Testis (tissue), 5 donors: ENCODE measurements at regions of chr17 and their contacts with region 1.

Region 1: GRCh38 chr17:34637548-34638525 is 58.5 kb downstream of the TMEM132E start:
- DNase-seq: peak; percentile 87
- H3K4me3 ChIP-seq: peak overlapping the region; percentile 35 to 44
- H3K27ac ChIP-seq: no peak overlapping the region
- H3K4me1 ChIP-seq: peaks cover 3% of the 10 kb centered on the region
- H3K27me3 ChIP-seq: no peaks in the 10 kb centered on the region
- CTCF ChIP-seq: peak; percentile 74 to 89 (median 84)
- POLR2A ChIP-seq: no peak

Region 2: GRCh38 chr17:34420254-34420766 is 217.5 kb before region 1 on chr17:
- intact Hi-C with region 1: loop called (anchors 10 kb)
- DNase-seq: peak; percentile 85
- H3K4me3 ChIP-seq: no peak overlapping the region
- H3K27ac ChIP-seq: no peak overlapping the region
- H3K4me1 ChIP-seq: no peaks in the 10 kb centered on the region
- H3K27me3 ChIP-seq: no peaks in the 10 kb centered on the region
- CTCF ChIP-seq: peak; percentile 83 to 97 (median 90)
- POLR2A ChIP-seq: no peak